ENCODE measurements at regions of chr3 and their contacts with region 1.

Region 1: DNA sequence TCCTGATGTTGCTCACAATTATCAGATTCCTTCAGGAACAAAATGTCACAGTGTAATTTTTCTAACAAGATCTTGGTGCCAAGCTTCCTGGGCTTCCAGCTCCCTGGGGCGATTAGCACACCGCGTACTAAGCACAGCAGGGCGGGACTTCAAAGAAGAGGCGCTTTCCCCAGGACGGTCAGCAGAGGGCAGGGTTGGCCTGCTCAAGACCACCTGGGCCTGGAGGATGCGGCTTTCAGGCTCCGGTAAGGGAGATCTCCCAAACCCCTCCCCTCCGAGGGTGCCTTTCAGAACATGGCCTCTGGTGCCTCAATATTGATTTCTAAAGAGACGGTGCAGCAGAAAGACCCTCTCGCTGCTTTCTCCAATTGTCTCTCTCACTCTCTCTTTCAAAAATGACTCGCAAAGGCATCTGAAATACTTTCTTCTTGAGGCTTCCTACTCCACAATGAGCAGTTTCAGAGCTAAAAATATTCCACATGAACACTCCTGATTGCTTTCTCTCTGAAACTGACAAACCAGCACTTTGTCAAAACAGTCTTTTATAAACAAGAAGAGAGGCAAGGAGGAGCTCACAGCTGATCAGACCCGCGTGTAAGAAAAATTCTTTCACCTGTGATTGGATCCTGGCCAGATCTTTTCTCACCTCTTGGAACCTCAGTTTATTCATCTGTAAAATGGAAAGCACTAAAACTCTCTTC is 154.0 kb downstream of the ADAMTS9 start:
- DNase-seq: peak; percentile 20
- H3K4me3 ChIP-seq: no peak overlapping the region
- H3K27me3 ChIP-seq: peaks cover 2% of the 10 kb centered on the region
- CTCF ChIP-seq: peak; percentile 92

Region 2: DNA sequence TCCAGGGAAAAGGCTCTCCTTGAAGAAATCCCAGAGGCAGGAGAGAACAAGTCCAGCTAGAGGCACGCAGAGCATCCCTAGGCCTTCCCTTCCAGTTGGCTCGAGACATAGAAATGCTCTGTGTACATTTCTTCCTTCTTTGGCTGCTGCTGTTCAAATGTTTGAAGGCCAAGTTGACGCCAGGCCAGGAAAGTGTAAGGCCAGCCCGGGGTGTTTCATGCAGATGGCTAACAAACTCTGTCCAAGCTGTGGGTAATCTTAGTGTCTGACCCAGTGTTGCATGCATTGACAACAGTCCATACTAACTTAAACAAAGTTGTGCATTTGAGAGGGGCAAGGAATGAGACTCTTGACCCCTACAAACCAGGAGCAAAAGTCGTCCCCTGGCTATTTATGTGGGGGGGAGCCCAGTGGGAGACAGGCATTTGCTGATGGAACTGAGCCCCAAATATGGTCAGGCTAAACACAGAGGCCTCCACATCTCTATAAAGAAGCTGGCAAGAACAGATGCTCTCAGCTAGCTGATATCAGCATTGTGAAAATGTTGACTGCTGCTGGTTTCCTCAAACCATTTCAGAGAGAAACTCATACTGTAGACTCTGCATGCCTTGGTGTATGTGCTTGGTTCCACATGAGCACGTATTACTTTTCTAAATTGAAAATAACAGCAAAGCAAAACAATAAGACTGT is 14.6 kb after region 1 on chr3:
- CTCF ChIA-PET with region 1: interaction called, 17 read pairs
- POLR2A ChIA-PET with region 1: no interaction called
- DNase-seq: no peak
- H3K4me3 ChIP-seq: no peak overlapping the region
- H3K27me3 ChIP-seq: no peaks in the 10 kb centered on the region; the same call in 1 of the 2 replicates
- CTCF ChIP-seq: no peak

Region 3: DNA sequence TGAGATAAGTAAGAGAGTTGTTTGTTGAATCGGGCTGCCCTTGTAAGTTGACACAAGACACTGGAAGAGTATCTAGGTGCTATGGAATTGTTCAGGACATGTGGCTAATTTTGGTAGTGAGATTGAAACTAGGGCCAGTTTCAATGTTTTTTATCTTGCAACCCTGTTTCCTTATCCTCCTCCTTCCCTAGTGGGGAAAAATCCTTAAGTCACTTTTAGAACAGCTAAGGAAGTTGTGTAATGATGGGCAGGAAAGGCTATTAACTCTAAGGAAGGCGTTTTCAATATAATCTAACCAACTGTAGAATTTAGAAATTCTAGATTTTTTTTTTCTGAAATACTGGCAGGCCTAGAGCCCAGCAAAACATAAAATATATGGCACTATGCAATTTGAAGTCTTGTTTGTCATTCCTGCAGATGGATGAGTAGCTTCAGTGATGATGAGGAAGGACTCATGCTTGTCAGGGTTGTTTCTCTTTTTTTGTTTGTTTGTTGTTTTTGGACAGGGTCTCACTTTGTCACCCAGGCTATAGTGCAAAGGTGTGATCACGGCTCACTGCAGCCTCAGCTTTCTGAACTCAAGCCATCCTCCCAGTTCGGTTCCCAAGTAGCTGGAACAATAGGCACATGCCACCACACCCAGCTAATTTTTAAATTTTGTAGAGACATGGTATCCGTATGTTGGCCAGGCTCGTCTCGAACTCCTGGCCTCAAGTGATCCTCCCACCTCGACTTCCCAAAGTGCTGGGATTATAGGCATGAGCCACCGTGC is 181.6 kb after region 1 on chr3:
- CTCF ChIA-PET with region 1: interaction called, 3 read pairs
- POLR2A ChIA-PET with region 1: interaction called, 12 read pairs
- DNase-seq: no peak
- H3K4me3 ChIP-seq: no peak overlapping the region
- H3K27me3 ChIP-seq: no peaks in the 10 kb centered on the region
- CTCF ChIP-seq: no peak

Region 4: GRCh38 chr3:65245133-65246063 is 711.6 kb after region 1 on chr3:
- CTCF ChIA-PET with region 1: interaction called, 14 read pairs
- POLR2A ChIA-PET with region 1: no interaction called
- DNase-seq: no peak
- H3K4me3 ChIP-seq: no peak overlapping the region
- H3K27me3 ChIP-seq: 0 out of 2 replicates have a peak, but pooled peaks cover 2% of the 10 kb centered on the region
- CTCF ChIP-seq: no peak; the same call in 1 of the 2 replicates

Measured in BJ (cell line).